Mammary epithelial cell (primary cell): ENCODE measurements at regions of chr20 and their contacts with region 1.

Region 1: DNA sequence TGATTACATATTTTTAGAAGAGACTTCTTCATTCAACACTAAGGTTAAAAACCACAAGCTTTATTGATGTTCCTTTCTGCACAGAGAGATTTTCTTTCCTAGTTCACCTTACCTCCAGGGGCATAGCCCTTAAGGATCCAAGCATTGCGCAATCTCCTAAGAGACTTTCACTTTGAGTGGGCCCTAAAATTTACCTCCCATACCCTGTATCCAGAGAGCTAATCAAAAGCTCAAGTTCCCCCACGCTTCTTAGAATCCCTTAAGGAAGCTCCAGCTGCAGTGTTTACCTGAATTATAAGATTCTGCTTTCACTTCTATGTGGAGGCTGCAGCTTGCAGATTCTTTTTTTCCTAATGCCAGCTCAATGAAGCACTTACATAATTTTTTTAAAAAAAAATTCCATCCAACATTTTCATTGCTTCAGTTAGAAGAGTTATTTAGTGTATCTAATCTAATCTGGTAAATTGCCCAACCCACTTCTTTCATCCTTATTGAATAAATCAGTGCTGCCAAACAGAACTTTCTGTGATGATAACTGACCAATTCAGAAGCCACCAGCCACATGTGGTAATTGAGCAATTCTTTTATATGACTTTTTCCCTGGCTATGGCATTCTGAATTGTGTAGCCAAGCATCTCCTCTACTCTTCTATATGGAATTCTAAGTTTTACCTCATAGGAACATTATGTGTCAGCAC is 24.6 kb upstream of the SPTLC3 start:
- DNase-seq: no peak
- H3K4me3 ChIP-seq: peak overlapping the region in 1 of 3 experiments; percentile 10
- H3K27ac ChIP-seq: peak overlapping the region; percentile 38
- H3K4me1 ChIP-seq: peaks cover 19% of the 10 kb centered on the region
- H3K27me3 ChIP-seq: no peaks in the 10 kb centered on the region
- CTCF ChIP-seq: no peak

Region 2: DNA sequence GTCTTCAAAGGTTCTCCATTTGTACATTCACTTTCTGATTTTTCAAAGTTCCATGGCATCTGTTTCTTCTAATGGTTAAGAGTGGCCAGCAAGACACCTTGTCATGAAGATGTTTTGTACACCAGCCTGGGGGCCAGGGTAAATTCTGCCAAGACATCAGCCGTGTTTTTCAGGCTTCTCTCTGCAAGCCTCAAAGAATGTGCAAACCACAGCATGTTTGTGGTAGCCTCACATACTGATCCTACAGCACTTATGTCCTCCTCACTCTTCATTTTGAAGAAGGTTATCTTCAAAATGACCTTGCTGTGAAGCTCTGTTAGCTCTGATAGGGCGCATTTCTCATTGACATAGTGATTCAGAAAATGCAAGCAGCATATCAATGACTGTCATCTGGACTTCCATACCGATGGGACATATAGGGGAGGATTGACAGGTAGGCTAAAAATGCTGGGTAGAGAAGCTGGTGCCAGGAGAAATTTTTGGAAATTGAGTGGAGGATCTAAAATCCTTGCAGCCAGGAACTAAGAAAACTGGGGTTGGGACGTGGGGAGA is 34.7 kb before region 1 on chr20:
- CTCF ChIA-PET with region 1: no interaction called
- dilution Hi-C with region 1: no loop called
- in situ Hi-C with region 1: no loop called
- intact Hi-C with region 1: no loop called
- DNase-seq: no peak
- H3K4me3 ChIP-seq: no peak overlapping the region
- H3K27ac ChIP-seq: no peak overlapping the region
- H3K4me1 ChIP-seq: no peaks in the 10 kb centered on the region
- H3K27me3 ChIP-seq: no peaks in the 10 kb centered on the region
- CTCF ChIP-seq: no peak

Region 3: DNA sequence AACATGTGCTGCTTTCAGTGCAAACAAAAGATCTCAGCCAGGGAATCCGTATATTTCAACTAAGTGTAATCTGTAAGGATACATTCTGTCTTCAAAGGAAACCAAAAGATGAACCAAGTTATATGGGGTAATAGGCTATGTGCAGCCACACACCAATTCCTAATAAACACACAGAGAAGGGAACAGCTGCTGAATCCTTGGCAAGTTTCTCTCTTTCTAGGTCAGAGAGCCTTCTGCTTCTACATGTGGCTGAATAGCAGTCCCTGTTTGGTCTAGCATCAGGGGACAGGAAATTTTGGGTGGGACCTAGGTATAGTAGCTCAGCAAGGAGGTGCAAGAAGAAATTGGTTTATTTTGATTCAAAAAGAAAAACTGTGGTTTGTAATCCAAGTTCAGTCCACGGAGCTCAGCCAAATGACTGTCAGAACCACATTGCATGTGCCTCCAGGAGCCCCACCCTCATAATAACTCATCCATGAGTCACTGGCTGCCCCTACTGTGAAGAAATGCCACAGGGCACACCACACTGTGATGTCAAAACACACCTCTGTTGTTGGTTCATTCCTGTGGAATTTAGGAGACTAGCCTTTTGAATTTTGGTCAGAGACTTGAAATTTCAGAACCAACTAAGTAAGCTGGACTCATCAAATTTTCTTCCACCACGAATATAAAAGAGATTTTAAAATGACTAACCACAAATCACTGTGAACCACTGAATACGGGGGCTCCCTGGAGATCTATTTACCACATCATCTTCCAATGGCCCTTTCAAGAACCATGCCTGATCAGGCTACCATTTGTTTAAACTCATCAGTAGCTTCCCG is 45.7 kb after region 1 on chr20:
- CTCF ChIA-PET with region 1: no interaction called
- dilution Hi-C with region 1: no loop called
- in situ Hi-C with region 1: no loop called
- intact Hi-C with region 1: loop called (anchors 5 kb)
- DNase-seq: peak; percentile 95
- H3K4me3 ChIP-seq: peak overlapping the region in 1 of 3 experiments; percentile 5
- H3K27ac ChIP-seq: peak overlapping the region; percentile 86
- H3K4me1 ChIP-seq: peaks cover 56% of the 10 kb centered on the region
- H3K27me3 ChIP-seq: no peaks in the 10 kb centered on the region
- CTCF ChIP-seq: no peak

Region 4: DNA sequence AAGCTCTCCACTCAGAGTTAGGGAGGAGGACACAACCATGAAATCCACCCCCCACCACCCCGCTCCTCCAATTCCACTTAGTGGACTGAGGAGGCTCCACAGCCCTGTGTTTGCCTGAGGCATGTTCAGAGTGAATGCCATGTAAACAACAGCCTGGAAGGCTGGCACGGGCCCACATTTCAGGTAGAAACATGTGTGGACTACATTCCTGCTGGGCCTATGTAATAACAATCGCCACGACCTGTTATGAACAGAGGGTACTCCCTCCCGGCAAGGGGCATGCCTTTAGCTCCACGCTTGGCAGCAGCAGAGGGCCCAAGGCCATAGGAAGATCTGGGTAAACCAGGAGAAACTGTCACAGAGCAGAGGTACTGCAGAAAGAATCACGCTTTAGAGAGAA is 302.4 kb after region 1 on chr20:
- CTCF ChIA-PET with region 1: no interaction called
- dilution Hi-C with region 1: loop called (anchors 25 kb)
- in situ Hi-C with region 1: no loop called
- intact Hi-C with region 1: no loop called
- DNase-seq: peak; percentile 84
- H3K4me3 ChIP-seq: no peak overlapping the region
- H3K27ac ChIP-seq: peak overlapping the region; percentile 56
- H3K4me1 ChIP-seq: peaks cover 28% of the 10 kb centered on the region
- H3K27me3 ChIP-seq: no peaks in the 10 kb centered on the region
- CTCF ChIP-seq: peak in 1 of 2 donors; percentile 29